Mammary epithelial cell (primary cell): ENCODE measurements at regions of chr14 and their contacts with region 1.

Region 1: DNA sequence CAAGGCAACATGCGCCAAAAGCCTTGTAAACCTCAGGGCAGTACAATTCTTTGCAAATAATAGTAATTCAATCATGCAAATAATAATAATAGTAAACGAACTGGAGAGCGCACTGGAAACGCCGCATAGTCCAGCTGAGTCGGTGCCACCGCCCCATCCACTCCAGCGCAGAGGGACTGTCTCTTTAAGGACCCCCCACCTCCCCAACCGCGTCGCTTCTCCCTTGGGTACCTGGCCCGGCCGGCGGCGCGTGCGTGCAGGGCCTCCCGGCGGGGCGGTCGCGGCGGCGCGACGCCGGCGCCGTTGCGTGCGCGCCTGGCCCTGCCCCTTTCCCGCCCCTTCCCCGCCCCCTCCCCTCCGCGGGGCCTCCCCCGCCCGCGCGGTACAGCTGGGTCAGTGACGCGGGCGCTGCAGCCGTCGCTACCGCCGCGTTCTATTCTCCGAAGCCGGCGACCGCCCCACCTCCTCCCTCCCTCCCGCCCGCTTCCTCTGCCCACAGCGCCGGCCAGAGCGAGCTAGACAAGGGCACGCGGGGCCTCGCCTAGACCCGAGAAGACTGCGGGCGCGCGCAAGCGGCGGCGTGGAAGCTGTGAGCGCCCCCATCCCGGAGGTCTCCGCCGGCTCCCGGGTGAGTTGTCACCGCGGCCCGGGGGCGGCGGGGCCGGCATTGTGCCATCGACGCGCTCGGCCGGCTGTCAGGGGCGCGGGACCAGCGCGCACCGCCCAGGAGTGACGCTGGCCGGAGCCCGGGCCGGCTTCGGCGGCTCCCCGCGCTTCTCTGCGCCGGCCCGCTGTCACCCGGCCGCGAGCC is at the start of gene SUSD6:
- DNase-seq: peak; percentile 83
- H3K4me3 ChIP-seq: peak within 1 kb of the TSS; percentile 78 to 82 (median 79)
- H3K27ac ChIP-seq: peak within 1 kb of the TSS; percentile 93
- H3K4me1 ChIP-seq: peaks cover 39% of the 10 kb centered on the region
- H3K27me3 ChIP-seq: no peaks in the 10 kb centered on the region
- CTCF ChIP-seq: no peak
- total RNA-seq, gene SUSD6: 34.8 to 45.6 TPM

Region 2: DNA sequence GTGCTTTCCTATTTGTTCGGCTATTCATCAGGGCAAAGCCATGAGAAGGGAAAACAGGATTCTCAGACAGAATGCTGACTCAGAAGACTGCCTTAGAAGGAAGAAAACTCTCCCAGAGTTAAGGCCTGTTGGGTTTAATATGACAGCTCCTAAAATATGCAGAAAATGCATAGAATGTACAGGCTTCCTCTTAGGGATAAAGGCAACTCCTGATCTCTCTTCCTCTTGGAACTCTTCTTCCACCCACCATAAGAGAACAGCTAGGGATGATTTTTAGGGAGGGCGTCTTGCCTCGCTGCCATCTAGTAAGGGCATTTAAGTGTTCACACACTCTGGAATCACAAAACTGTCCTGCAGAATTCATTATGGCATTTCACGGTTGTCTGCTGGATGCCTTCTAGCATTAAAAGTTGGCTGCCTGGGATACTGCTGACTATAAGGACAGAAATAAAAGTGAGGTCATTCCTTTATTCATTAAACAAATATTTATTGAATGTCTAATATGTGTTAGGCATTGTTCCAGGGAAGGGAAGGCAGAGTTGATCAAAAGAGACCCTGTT is 532.1 kb before region 1 on chr14:
- CTCF ChIA-PET with region 1: no interaction called
- dilution Hi-C with region 1: no loop called
- in situ Hi-C with region 1: no loop called
- intact Hi-C with region 1: no loop called
- DNase-seq: peak; percentile 51
- H3K4me3 ChIP-seq: no peak overlapping the region
- H3K27ac ChIP-seq: peak overlapping the region; percentile 80
- H3K4me1 ChIP-seq: peaks cover 29% of the 10 kb centered on the region
- H3K27me3 ChIP-seq: no peaks in the 10 kb centered on the region
- CTCF ChIP-seq: no peak

Region 3: DNA sequence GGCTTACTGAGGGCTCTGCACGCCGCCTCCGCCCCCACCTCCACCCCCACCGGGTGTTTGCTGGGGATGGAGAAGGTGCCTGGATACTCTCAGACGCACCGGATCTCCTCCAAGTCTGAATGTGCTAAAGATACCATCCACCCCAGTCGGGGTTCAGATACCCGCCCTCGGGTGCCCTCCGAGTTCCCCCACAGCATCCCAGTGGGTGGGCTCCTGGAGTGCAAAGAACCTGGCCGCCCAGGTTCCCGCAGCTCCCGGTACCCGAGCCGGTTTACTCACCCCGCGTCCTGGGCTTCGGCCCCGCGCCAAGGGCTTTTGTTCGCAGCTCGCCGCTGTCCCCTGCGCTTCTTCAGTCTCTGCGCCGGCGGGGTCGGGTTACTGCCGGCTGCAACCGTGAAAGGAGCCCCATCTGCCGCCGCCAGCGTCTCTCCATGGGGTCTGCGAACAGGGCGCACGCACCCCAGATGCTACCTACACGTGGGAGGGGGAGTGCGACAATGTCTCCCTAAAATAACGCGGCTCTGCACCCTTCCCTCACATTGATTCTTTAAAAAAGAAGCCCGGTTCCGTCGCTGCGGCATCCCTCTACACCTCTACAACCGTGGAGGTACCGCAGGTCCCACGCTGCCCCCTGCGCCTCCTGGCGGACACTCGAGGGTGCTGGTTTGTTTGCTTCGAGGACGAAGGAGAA is 37.0 kb before region 1 on chr14 and contains the start of gene CCDC177:
- CTCF ChIA-PET with region 1: no interaction called
- dilution Hi-C with region 1: no loop called
- in situ Hi-C with region 1: no loop called
- intact Hi-C with region 1: no loop called
- DNase-seq: peak; percentile 48
- H3K4me3 ChIP-seq: peak within 1 kb of the TSS in 2 of 3 experiments; percentile 28 to 36
- H3K27ac ChIP-seq: no peak within 1 kb of the TSS
- H3K4me1 ChIP-seq: peaks cover 12% of the 10 kb centered on the region
- H3K27me3 ChIP-seq: peaks cover 37% of the 10 kb centered on the region
- CTCF ChIP-seq: peak; percentile 87 to 99
- total RNA-seq, gene CCDC177: not detected

Region 4: GRCh38 chr14:69586404-69586803 is 25.0 kb before region 1 on chr14:
- CTCF ChIA-PET with region 1: no interaction called
- dilution Hi-C with region 1: no loop called
- in situ Hi-C with region 1: no loop called
- intact Hi-C with region 1: loop called (anchors 2 kb)
- DNase-seq: no peak
- H3K4me3 ChIP-seq: no peak overlapping the region
- H3K27ac ChIP-seq: no peak overlapping the region
- H3K4me1 ChIP-seq: no peaks in the 10 kb centered on the region
- H3K27me3 ChIP-seq: no peaks in the 10 kb centered on the region
- CTCF ChIP-seq: no peak

Region 5: DNA sequence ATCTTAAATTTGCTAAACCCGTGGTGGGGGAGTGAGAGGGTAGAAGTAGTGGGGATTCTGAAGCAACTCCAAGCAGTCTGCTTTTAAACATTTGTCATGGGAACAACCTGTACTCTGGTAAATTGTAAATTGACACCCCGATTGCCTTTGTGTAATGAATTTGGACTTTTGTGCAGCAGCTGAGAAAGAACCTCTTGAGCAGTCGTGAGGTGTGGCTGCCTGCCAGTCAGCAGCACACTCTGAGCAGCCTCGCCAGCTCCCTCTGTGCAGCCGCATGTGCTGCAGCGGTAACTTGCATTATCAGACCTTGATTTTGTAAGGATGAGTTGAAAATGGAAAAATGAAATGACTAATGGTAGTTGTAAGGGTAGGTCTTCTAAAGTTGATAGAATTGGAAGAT is 74.3 kb after region 1 on chr14:
- CTCF ChIA-PET with region 1: no interaction called
- dilution Hi-C with region 1: no loop called
- in situ Hi-C with region 1: no loop called
- intact Hi-C with region 1: loop called (anchors 1 kb)
- DNase-seq: peak; percentile 77
- H3K4me3 ChIP-seq: peak overlapping the region; percentile 1 to 17 (median 10)
- H3K27ac ChIP-seq: peak overlapping the region; percentile 94
- H3K4me1 ChIP-seq: peaks cover 45% of the 10 kb centered on the region
- H3K27me3 ChIP-seq: no peaks in the 10 kb centered on the region
- CTCF ChIP-seq: peak in 1 of 2 donors; percentile 20